ENCODE measurements at regions of chr1 and their contacts with region 1.

Region 1: GRCh38 chr1:34460193-34460592 is 283.5 kb downstream of the C1orf94 start:
- DNase-seq: peak; percentile 67
- CTCF ChIP-seq: peak; percentile 76

Region 2: GRCh38 chr1:34511802-34512201 is 51.6 kb after region 1 on chr1:
- in situ Hi-C with region 1: no loop called
- DNase-seq: no peak
- CTCF ChIP-seq: no peak

Region 3: GRCh38 chr1:34590211-34590623 is 130.0 kb after region 1 on chr1:
- in situ Hi-C with region 1: loop called (anchors 5 kb)
- DNase-seq: no peak
- CTCF ChIP-seq: no peak

Region 4: GRCh38 chr1:34696185-34696584 is 236.0 kb after region 1 on chr1:
- in situ Hi-C with region 1: no loop called
- DNase-seq: no peak
- CTCF ChIP-seq: no peak